Prostate gland (tissue), 2 donors: ENCODE measurements at regions of chr5 and their contacts with region 1.

Region 1: DNA sequence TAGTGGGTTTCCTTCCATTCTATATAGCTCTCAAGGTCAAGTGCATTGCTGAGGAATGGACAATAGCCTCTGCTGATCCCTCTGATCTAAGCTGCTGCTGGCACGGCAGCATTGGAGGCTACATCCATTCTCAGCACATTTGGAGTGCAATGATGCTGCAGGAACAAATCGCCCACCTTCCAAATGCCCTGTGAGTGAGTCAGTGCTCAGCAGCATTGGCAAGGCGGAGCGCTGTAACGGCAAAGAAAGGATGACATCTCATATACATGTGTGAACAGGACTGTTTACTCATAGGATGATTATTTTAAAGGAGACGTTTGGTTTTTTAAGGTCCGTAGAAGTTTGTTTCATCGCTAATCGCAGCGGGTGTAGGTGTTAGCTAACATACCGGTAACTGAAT is 408.7 kb downstream of the ARHGEF28 start:
- DNase-seq: peak; percentile 7
- H3K4me3 ChIP-seq: no peak overlapping the region
- H3K27ac ChIP-seq: no peak overlapping the region
- H3K4me1 ChIP-seq: no peaks in the 10 kb centered on the region
- H3K27me3 ChIP-seq: no peaks in the 10 kb centered on the region
- CTCF ChIP-seq: no peak
- POLR2A ChIP-seq: no peak

Region 2: GRCh38 chr5:73945498-73945897 is 89.2 kb before region 1 on chr5:
- intact Hi-C with region 1: no loop called
- DNase-seq: no peak
- H3K4me3 ChIP-seq: no peak overlapping the region
- H3K27ac ChIP-seq: no peak overlapping the region
- H3K4me1 ChIP-seq: no peaks in the 10 kb centered on the region
- H3K27me3 ChIP-seq: no peaks in the 10 kb centered on the region
- CTCF ChIP-seq: no peak
- POLR2A ChIP-seq: no peak

Region 3: DNA sequence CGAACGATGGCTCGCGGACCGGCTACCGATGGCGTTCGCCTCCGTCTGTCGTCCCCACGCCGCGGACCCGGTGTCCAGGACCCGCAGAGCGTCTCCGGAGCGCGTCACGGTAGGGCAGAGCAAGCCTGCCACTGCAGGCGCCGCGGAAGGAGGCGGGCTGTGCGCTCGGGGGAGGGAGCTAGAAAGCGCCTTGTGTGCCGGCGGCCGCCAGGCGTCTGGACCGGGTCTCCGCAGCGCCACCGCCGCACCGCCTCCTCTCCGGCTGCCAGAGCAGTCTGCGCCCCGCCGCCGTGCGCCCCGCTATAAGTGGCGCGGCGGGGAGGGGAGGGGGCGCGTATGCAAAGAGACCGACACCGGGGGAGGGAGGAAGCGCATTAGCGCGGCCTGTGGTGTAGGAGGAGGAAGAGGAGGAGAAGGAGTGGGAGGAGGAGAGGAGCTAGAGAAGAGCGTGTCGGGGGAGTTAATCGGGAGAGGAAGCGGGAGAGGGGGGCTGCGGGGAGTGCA is 605.8 kb after region 1 on chr5 and contains the start of gene ENC1:
- intact Hi-C with region 1: loop called (anchors 5 kb)
- DNase-seq: peak; percentile 80
- H3K4me3 ChIP-seq: peak within 1 kb of the TSS; percentile 56 to 60
- H3K27ac ChIP-seq: peak within 1 kb of the TSS; percentile 76 to 78
- H3K4me1 ChIP-seq: peaks cover 12% of the 10 kb centered on the region
- H3K27me3 ChIP-seq: no peaks in the 10 kb centered on the region
- CTCF ChIP-seq: peak; percentile 40 to 80 (median 56)
- POLR2A ChIP-seq: peak; percentile 62
- total RNA-seq, gene ENC1: 78.1 to 103 TPM